Sciatic nerve (tissue), 2 donors: ENCODE measurements at regions of chr20 and their contacts with region 1.

Region 1: DNA sequence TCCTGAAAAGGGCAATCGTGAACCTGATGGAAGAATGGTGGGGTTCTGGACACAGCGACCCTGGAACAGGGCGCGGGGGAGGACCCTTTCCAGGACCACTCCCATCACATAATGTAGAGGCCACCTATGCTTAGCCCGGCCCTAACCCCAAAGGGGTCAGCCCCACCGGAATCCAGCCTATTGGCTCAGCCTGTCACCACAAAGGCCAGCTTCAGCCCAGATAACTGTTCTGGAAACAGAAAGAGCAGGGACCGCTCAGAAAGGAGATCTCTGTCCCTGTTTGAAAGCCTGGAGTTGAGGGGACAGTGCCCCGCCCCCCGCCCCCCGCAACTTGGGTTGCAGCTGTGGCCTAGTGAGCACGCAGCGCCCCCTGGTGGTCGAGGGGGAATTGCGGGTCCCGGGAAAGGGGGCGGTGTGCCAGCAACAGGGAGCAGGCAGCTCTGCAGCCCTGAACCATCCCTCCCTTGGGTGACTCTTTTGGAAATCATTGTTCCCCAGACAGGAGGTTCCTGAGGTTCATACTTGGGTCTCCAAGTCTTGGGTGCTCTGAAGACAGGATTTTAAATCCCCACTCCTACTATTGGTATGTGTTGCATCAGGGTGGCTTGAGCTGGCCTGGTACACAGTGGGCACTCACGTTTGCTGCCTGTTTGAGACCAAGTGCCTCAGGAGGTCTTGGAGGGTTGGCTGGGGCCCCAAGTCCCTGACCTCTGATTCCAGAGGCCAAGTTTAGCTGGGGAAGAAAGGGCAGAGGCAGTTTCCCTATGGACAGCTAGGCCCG is 1.5 kb downstream of the SIGLEC1 start:
- DNase-seq: peak; percentile 89
- ATAC-seq: peak; percentile 75

Region 2: DNA sequence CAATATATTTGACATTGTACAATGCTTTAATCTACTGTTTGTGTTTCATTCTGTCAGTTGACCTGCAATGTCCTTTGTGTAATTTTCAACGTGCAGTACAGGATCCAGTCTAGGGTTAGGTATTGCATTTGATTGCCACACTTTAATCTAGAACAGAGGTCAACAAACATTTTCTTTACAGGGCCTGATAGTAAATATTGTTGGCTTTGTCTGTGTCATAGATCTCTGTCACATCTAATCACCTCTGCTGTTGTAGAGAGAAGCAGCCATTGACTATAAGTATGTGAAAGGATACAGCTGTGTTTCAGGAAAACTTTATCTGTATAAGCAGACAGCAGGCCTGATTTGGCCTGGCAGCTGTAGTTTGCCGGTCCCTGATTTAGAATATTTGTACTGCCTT is 200.8 kb before region 1 on chr20:
- intact Hi-C with region 1: no loop called
- DNase-seq: no peak
- ATAC-seq: no peak

Region 3: GRCh38 chr20:3677733-3678132 is 33.2 kb before region 1 on chr20:
- intact Hi-C with region 1: loop called (anchors 2 kb)
- DNase-seq: no peak
- ATAC-seq: peak; percentile 10